Vagina (tissue), 2 donors: ENCODE measurements at regions of chr1 and their contacts with region 1.

Region 1: DNA sequence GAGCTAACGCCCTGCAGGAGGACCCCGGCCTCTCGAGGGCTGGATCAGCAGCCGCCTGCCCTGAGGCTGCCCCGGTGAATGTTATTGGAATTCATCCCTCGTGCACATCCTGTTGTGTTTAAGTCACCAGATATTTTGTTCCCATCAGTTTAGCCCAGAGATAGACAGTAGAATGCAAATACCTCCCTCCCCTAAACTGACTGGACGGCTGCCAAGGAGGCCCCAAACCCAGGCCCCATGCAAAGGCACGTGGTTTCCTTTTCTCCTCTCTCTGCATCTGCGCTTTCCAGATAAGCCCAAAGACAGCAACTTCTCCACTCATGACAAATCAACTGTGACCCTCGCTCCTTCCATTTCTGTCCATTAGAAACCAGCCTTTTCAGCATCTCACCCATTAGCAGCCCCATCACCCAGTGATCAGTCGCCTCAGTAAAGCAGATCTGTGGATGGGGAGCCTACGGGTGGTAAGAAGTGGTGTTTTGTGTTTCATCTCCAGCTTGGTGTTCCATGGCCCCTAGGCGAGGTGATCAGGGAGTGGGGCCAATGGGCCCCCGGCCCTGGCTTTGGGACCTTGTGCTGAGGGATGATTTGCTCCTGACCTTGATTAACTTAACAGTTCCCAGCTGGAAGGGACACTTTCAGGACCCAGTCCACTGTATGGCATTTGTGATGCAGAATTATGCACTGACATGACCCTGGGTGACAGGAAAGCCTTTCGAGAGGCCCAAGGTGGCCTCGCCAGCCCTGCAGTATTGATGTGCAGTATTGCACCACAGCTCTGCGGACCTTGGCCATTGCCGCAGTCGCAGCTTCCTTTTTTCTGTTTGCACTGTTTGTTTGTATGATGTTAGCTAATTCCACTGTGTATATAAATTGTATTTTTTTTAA is 5.2 kb downstream of the NPPA start:
- DNase-seq: no peak
- H3K4me3 ChIP-seq: no peak overlapping the region
- H3K27ac ChIP-seq: no peak overlapping the region
- H3K4me1 ChIP-seq: no peaks in the 10 kb centered on the region
- H3K27me3 ChIP-seq: no peaks in the 10 kb centered on the region
- CTCF ChIP-seq: no peak
- POLR2A ChIP-seq: no peak

Region 2: GRCh38 chr1:11531314-11531870 is 311.0 kb before region 1 on chr1:
- intact Hi-C with region 1: no loop called
- DNase-seq: no peak
- H3K4me3 ChIP-seq: no peak overlapping the region
- H3K27ac ChIP-seq: no peak overlapping the region
- H3K4me1 ChIP-seq: no peaks in the 10 kb centered on the region
- H3K27me3 ChIP-seq: no peaks in the 10 kb centered on the region
- CTCF ChIP-seq: no peak
- POLR2A ChIP-seq: no peak

Region 3: DNA sequence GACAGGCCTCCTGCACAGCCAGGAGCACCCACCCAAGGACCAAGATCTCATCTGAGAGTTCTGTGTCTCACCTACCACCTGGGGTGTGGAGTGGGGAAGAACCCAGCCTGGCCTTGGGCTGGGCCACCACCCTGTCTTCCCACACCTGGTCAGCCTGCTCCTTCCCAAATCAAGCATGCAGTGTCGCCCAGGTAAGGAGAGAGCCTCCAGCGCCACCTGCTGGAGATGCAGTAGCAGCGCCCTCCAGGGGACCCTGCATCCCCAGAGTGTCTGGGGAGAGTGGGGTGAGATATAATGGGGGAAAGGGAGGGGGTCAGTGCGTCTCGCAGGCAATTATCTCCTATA is 51.5 kb after region 1 on chr1:
- intact Hi-C with region 1: loop called (anchors 5 kb)
- DNase-seq: no peak
- H3K4me3 ChIP-seq: no peak overlapping the region
- H3K27ac ChIP-seq: no peak overlapping the region
- H3K4me1 ChIP-seq: no peaks in the 10 kb centered on the region
- H3K27me3 ChIP-seq: no peaks in the 10 kb centered on the region
- CTCF ChIP-seq: peak; percentile 41 to 66 (median 52)
- POLR2A ChIP-seq: no peak